ENCODE measurements at regions of chr9 and their contacts with region 1.

Region 1: DNA sequence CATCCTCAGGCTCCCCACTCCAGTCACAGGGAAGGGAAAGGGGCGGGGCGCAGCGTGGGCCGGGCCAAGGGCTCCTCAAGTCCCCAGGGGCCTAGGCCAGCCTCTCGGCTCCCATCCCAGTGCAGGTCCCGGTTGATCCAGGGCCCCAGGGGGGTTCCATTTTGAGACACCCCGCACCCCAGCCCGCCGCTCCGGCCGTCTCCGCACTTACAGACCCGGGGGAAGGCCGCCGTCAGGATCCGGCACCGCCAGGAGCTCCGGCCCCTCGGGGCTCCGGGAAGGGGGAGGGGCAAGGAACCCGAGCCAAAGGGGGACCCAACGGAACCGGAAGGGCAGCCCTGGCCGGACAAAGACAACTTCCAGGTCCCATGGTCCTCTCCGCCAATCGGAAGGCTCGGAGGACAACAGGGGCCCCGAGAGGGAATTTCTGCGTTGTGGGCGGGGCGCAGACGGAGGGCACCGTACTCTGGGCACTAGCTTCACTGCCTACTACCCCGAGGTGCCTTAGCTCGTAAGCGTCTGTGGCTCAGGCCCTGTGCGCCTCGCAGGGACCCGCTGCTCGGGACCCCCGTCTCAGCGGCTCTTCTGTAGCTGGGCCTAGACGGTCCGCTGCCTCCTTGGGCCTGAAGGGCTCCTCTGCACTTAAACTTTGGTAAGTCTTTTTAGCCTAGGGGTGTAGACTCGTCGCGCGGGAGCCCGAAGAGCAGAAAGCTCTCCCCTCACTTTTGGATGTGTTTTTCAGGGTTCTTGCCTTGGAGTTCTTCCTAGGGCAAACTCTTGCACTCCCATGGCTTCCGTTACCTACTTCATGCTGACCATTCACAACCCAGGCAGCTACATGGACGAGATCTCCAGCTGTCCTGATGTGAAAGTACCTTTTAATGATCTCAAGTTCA is at the start of gene ZBTB26:
- DNase-seq: peak; percentile 94
- ATAC-seq: peak; percentile 98
- H3K4me3 Mint-ChIP-seq: no peak within 1 kb of the TSS
- H3K27ac Mint-ChIP-seq: peak within 1 kb of the TSS; percentile 92
- H3K4me1 Mint-ChIP-seq: peaks cover 12% of the 10 kb centered on the region
- H3K27me3 Mint-ChIP-seq: no peaks in the 10 kb centered on the region
- total RNA-seq, gene ZBTB26: 7.7 to 9.0 TPM

Region 2: DNA sequence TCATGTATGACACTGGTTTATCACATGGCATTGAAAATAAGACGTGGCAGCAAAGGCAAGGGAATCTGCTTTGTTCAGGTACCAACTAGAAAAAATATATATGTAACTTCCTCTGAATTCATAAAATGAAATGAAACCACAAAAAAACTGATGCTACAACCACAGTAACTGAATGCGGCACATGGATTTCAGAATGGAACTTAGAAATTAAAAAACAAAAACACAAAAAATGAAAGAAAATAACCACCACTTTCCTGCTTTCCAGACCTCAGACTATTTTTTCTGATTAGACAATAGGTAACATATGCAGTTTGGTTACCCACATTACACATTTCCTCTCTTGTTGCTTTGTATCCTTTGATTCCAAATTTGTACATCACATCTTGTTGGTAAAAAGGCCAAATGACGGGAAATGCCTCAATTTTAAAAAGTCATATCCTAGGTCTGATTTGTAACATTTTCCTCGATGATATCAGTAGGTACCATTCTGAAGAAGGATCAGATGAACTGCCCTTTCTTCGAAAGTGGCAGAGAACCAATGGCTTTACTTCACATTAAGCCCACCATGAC is 85.0 kb before region 1 on chr9:
- CTCF ChIA-PET with region 1: no interaction called
- DNase-seq: no peak
- ATAC-seq: peak; percentile 6
- H3K4me3 Mint-ChIP-seq: no peak overlapping the region
- H3K27ac Mint-ChIP-seq: peak overlapping the region; percentile 74
- H3K4me1 Mint-ChIP-seq: peaks cover 26% of the 10 kb centered on the region
- H3K27me3 Mint-ChIP-seq: no peaks in the 10 kb centered on the region

Region 3: DNA sequence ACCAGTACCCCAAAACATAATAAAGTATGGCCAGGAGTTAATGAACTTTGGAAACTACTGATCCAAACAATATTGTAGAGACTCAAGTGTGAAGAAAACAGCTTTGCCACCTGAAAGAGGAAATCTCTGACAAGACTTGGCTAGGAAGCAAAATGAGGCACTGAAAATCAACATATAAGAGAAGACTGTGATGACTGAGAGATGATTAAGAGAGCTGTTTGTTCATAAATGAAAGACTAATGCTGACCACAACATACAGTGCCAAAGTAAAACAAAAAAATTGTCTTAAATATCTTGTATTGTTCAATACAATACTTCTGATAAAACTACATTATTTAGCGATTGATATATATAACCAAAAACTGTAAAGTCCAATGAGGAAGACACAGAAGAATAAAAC is 33.5 kb before region 1 on chr9:
- CTCF ChIA-PET with region 1: no interaction called
- DNase-seq: no peak
- ATAC-seq: no peak
- H3K4me3 Mint-ChIP-seq: no peak overlapping the region
- H3K27ac Mint-ChIP-seq: peak overlapping the region; percentile 47
- H3K4me1 Mint-ChIP-seq: peaks cover 34% of the 10 kb centered on the region
- H3K27me3 Mint-ChIP-seq: no peaks in the 10 kb centered on the region

Region 4: GRCh38 chr9:122912964-122913673 is 18.4 kb before region 1 on chr9 and contains the start of gene ZBTB6:
- CTCF ChIA-PET with region 1: interaction called, 14 read pairs
- DNase-seq: peak; percentile 84
- ATAC-seq: peak; percentile 95
- H3K4me3 Mint-ChIP-seq: peak within 1 kb of the TSS; percentile 100
- H3K27ac Mint-ChIP-seq: peak within 1 kb of the TSS; percentile 99
- H3K4me1 Mint-ChIP-seq: peaks cover 32% of the 10 kb centered on the region
- H3K27me3 Mint-ChIP-seq: no peaks in the 10 kb centered on the region
- total RNA-seq, gene ZBTB6: 9.4 to 11.7 TPM

Measured in activated CD8-positive, alpha-beta memory T cell treated with anti-CD3 and anti-CD28 coated beads, Interleukin-2, amount 10 ng/mL, durations not matched to agents 7 days and 5 days (primary cell).